ENCODE measurements at regions of chr11 and their contacts with region 1.

Region 1: GRCh38 chr11:3854977-3855807 is at the start of gene STIM1:
- DNase-seq: peak; percentile 99
- H3K4me3 ChIP-seq: peak within 1 kb of the TSS; percentile 83 to 99 (median 98)
- H3K27ac ChIP-seq: peak within 1 kb of the TSS; percentile 98 to 99 (median 98)
- H3K4me1 ChIP-seq: peaks cover 37 to 51% (median 49%) of the 10 kb centered on the region in 4 donors
- H3K27me3 ChIP-seq: no peaks in the 10 kb centered on the region
- CTCF ChIP-seq: peak; percentile 98 to 100 (median 99)
- EP300 ChIP-seq: no peak
- POLR2A ChIP-seq: peak; percentile 78
- total RNA-seq, gene STIM1: 65.2 to 150 (median 92.6) TPM

Region 2: DNA sequence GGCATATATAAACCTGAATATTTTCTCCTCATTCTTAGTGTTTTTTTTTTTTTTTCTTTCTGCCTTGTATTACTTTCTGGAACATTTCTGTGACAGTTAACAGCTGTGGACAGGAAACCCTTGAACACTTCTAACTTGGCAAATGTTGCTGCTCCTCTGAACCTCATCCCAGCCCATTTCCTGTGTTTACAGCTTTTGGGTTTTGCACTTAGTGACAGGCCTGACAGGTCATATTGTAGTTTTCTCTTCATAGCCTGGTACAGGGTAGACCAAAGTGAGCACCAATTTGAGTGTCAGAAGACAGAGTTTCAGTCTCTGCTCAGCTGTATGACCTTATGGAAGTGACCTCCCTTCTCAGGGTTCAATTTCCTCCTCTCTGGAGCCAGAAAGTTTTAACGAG is 91.9 kb after region 1 on chr11:
- intact Hi-C with region 1: loop called (anchors 10 kb)
- DNase-seq: no peak
- H3K4me3 ChIP-seq: no peak overlapping the region
- H3K27ac ChIP-seq: peak overlapping the region; percentile 75 to 84 (median 80)
- H3K4me1 ChIP-seq: peaks cover 87 to 100% (median 95%) of the 10 kb centered on the region in 4 donors
- H3K27me3 ChIP-seq: no peaks in the 10 kb centered on the region
- CTCF ChIP-seq: no peak
- EP300 ChIP-seq: no peak
- POLR2A ChIP-seq: no peak

Region 3: GRCh38 chr11:3984896-3985295 is 129.7 kb after region 1 on chr11:
- intact Hi-C with region 1: loop called (anchors 10 kb)
- DNase-seq: no peak
- H3K4me3 ChIP-seq: no peak overlapping the region
- H3K27ac ChIP-seq: no peak overlapping the region
- H3K4me1 ChIP-seq: peaks cover 9 to 90% (median 60%) of the 10 kb centered on the region in 4 donors
- H3K27me3 ChIP-seq: no peaks in the 10 kb centered on the region
- CTCF ChIP-seq: no peak
- EP300 ChIP-seq: no peak
- POLR2A ChIP-seq: no peak

Region 4: GRCh38 chr11:4072668-4073285 is 217.6 kb after region 1 on chr11:
- intact Hi-C with region 1: loop called (anchors 1 kb)
- DNase-seq: no peak
- H3K4me3 ChIP-seq: no peak overlapping the region
- H3K27ac ChIP-seq: peak overlapping the region in 2 of 4 donors; percentile 23 to 24
- H3K4me1 ChIP-seq: peaks cover 11 to 51% (median 37%) of the 10 kb centered on the region in 4 donors
- H3K27me3 ChIP-seq: no peaks in the 10 kb centered on the region
- CTCF ChIP-seq: peak; percentile 79 to 91 (median 87)
- EP300 ChIP-seq: no peak
- POLR2A ChIP-seq: no peak

Measured in esophagus muscularis mucosa (tissue), 4 donors.